HEK293 (cell line): ENCODE measurements at regions of chrX and their contacts with region 1.

Region 1: GRCh38 chrX:109485470-109486340 is 3.8 kb upstream of the GUCY2F start:
- H3K4me3 ChIP-seq: no peak overlapping the region
- H3K27ac ChIP-seq: no peak overlapping the region
- H3K4me1 ChIP-seq: no peaks in the 10 kb centered on the region
- CTCF ChIP-seq: peak; percentile 84

Region 2: GRCh38 chrX:109464231-109464630 is 21.5 kb before region 1 on chrX:
- CTCF ChIA-PET with region 1: interaction called, 14 read pairs
- POLR2A ChIA-PET with region 1: no interaction called
- H3K4me3 ChIP-seq: no peak overlapping the region
- H3K27ac ChIP-seq: no peak overlapping the region
- H3K4me1 ChIP-seq: no peaks in the 10 kb centered on the region
- CTCF ChIP-seq: no peak

Region 3: GRCh38 chrX:109475174-109475891 is 10.4 kb before region 1 on chrX:
- CTCF ChIA-PET with region 1: interaction called, 82 read pairs
- POLR2A ChIA-PET with region 1: no interaction called
- H3K4me3 ChIP-seq: no peak overlapping the region
- H3K27ac ChIP-seq: no peak overlapping the region
- H3K4me1 ChIP-seq: no peaks in the 10 kb centered on the region
- CTCF ChIP-seq: peak; percentile 44

Region 4: GRCh38 chrX:109501176-109501575 is 15.5 kb after region 1 on chrX:
- CTCF ChIA-PET with region 1: interaction called, 29 read pairs
- POLR2A ChIA-PET with region 1: no interaction called
- H3K4me3 ChIP-seq: no peak overlapping the region
- H3K27ac ChIP-seq: no peak overlapping the region
- H3K4me1 ChIP-seq: no peaks in the 10 kb centered on the region
- CTCF ChIP-seq: no peak

Region 5: DNA sequence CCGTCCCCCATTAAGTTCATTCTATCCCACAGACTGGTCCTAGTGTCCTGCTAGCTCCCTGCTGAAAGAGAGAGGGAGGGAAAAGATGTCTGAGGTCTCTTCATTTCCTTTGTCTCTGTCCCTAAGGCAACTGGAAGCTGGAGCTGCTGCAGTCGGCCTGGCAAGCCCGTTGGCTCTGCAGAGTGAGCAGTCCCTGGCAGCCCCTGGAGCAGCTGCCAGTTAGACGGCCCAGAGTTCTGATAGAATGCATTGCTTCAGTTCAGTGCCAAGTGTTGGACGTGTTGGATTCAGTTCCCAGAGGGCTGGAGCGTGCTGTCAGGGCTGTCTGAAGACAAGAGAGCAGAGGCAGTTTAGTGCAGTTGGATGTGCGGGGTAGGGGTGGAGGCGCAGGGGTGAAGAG is 138.3 kb after region 1 on chrX:
- CTCF ChIA-PET with region 1: interaction called, 14 read pairs
- POLR2A ChIA-PET with region 1: interaction called, 4 read pairs
- H3K4me3 ChIP-seq: no peak overlapping the region
- H3K27ac ChIP-seq: no peak overlapping the region
- H3K4me1 ChIP-seq: no peaks in the 10 kb centered on the region
- CTCF ChIP-seq: no peak

Region 6: DNA sequence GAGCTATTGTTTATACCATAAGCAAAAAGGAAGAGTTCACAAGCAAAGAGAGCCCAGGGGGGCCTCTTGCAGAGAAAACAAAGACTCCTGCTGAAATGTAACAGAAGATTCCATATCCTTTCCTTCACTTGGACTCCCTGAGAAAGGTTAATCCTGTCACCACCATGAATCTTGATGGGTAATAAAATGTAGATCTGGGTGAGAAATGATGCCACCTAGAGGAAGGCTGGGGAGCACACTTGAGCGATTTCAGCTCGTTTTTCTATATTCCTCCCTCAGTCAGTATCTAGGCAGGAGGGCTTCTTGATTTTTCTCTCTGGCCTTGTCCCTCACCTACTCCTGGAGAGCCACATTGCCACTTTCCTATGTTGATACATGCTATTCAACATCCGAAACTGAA is 149.5 kb after region 1 on chrX:
- CTCF ChIA-PET with region 1: interaction called, 110 read pairs
- POLR2A ChIA-PET with region 1: no interaction called
- H3K4me3 ChIP-seq: no peak overlapping the region
- H3K27ac ChIP-seq: no peak overlapping the region
- H3K4me1 ChIP-seq: no peaks in the 10 kb centered on the region
- CTCF ChIP-seq: 0 out of 2 replicates have a peak, but pooled peaks have one; percentile 7